ENCODE measurements at regions of chr19 and their contacts with region 1.

Region 1: GRCh38 chr19:6862673-6863078 is 24.7 kb upstream of the ADGRE1 start:
- DNase-seq: peak; percentile 80 to 93 (median 88)
- ATAC-seq: peak; percentile 96
- H3K4me3 ChIP-seq: peak overlapping the region; percentile 22 to 35
- H3K27ac ChIP-seq: peak overlapping the region in 1 of 2 donors; percentile 63
- H3K4me1 ChIP-seq: peaks cover 0 to 21% of the 10 kb centered on the region in 2 donors
- H3K27me3 ChIP-seq: peaks cover 0 to 15% of the 10 kb centered on the region in 2 donors
- CTCF ChIP-seq: peak; percentile 86 to 92

Region 2: DNA sequence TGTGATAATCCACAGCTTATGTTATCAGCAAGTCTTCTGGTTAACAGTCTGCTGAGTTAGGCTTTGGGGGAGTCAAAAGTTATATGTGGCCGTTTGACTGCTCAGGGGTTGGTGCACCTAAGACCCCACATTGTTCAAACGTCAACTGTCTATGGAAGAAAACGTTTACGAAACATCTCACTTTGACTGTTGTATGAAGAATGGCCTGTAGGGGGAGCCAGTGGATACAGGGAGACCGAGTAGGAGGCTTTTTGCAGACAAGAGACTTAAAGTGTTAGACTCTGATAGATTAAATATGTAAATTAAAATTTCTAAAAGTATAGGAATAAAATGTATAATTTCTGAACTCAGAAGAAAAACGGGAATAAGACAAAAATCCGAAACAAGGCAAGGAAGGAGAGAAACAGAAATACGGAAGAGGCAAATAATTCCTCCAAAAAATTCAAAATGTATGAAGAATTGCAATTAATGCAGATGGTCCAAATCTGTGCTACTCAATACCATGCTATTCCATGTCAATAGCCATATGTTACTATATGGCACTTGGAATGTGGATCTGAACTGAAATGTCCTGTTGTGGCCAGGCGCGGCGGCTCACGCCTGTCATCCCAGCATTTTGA is 230.6 kb before region 1 on chr19:
- intact Hi-C with region 1: loop called in 1 of 2 experiments (anchors 5 kb)
- DNase-seq: peak in 3 of 4 donors; percentile 53 to 83 (median 66)
- ATAC-seq: peak; percentile 97
- H3K4me3 ChIP-seq: no peak overlapping the region
- H3K27ac ChIP-seq: no peak overlapping the region
- H3K4me1 ChIP-seq: no peaks in the 10 kb centered on the region
- H3K27me3 ChIP-seq: peaks cover 0 to 1% of the 10 kb centered on the region in 2 donors
- CTCF ChIP-seq: peak; percentile 81 to 87

Region 3: DNA sequence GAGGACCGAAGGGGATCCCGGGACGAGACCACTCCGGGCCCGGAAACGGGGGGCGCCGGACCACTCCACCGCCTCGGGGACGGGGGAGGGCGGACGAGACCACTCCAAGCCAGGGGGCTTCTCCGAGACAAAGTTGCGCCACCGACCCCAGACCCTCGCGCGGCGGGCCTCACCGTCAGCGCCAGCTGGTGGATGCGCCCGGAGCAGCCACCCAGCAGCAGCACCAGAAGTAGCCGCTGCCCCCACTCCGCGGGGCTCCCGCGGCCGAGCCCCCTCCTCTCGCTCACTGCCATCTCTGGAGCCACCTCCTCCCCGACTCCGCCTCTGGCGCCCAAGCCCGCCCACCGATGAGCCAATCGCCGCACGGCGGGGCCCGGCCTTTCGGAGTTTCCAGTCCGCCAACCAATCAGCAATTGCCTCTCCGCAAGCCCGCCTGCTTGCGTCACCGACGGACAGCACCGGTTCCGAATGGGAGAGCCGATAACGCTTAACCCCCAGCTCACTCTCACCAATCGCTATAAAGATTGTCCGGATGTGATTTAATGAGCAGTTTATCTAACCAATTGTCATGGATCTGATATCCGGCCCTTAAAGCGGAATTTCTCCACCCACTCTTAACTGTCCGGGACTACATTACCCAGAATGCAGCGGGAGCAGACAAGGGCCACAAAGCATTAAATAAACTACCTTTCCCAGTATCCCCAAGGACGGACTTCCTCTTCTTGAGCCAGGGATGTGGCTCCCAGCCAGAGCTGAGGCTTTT is 125.2 kb before region 1 on chr19 and contains the start of gene GPR108:
- intact Hi-C with region 1: loop called (anchors 10 kb)
- DNase-seq: peak; percentile 99 to 100 (median 100)
- ATAC-seq: peak; percentile 77
- H3K4me3 ChIP-seq: peak within 1 kb of the TSS; percentile 81 to 95
- H3K27ac ChIP-seq: peak within 1 kb of the TSS; percentile 94 to 96
- H3K4me1 ChIP-seq: peaks cover 22 to 65% of the 10 kb centered on the region in 2 donors
- H3K27me3 ChIP-seq: peaks cover 0 to 15% of the 10 kb centered on the region in 2 donors
- CTCF ChIP-seq: no peak
- polyA plus RNA-seq, gene GPR108: 51.0 to 77.7 (median 58.0) TPM

Region 4: GRCh38 chr19:6925386-6925785 is 62.7 kb after region 1 on chr19:
- intact Hi-C with region 1: no loop called
- DNase-seq: no peak
- ATAC-seq: no peak
- H3K4me3 ChIP-seq: no peak overlapping the region
- H3K27ac ChIP-seq: no peak overlapping the region
- H3K4me1 ChIP-seq: no peaks in the 10 kb centered on the region
- H3K27me3 ChIP-seq: no peaks in the 10 kb centered on the region
- CTCF ChIP-seq: no peak

Measured in left lung (tissue), 14 donors.